ENCODE measurements at regions of chr2 and their contacts with region 1.

Region 1: DNA sequence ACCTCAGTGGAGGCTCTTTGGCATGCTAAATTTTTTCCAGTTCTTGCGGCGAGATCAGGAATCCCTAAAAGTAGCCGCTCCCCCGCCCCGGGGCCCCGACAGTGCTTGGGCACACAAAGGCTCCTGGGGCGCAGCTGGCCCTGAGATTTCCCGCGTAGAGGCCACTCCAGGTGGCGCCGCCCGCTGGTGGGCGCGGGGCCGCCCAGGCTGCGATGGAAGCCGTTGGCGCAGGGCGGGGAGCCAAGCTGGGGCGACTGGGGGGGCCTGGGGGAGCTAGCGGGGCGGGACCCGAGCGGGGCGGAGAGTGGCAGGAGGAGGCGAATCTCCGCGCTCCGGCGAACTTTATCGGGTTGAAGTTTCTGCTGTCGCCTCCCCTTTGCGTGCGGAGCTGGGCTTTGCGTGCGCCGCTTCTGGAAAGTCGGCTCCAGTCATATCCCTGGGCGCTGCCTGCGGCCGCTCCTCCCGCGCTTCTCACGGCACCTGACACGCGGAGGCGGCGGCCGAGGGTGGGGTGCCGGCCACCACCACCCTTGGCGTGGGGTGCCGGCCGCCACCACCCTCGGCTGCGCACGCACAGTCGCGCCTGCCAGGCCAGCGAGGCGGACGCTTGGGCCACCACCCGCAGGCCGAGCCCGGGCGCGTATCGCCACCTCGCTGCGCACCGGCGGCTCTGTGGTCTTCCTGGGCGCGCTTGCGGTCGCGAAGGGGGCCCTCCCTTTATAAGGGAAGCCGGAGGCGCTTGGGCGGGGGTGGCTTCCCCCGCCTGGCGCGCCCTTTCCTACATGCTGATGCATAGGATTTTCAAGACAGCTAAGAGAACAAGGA is 867 bp upstream of the CYP1B1 start:
- DNase-seq: peak; percentile 98
- H3K4me3 ChIP-seq: peak overlapping the region; percentile 68 to 70
- H3K27ac ChIP-seq: peak overlapping the region in 1 of 2 experiments; percentile 88; a peak in 2 of 4 replicates
- H3K4me1 ChIP-seq: peaks cover 0 to 13% of the 10 kb centered on the region in 2 experiments; a peak in 1 of 4 replicates
- H3K27me3 ChIP-seq: no peaks in the 10 kb centered on the region; the same call in 1 of the 2 replicates
- CTCF ChIP-seq: peak; percentile 66
- EP300 ChIP-seq: 0 out of 4 replicates have a peak, but pooled peaks of 1 of the 2 experiments have one; percentile 3
- RAD21 ChIP-seq: no peak

Region 2: GRCh38 chr2:38000485-38001222 is 76.2 kb before region 1 on chr2:
- CTCF ChIA-PET with region 1: interaction called, 24 read pairs
- POLR2A ChIA-PET with region 1: no interaction called
- DNase-seq: no peak
- H3K4me3 ChIP-seq: no peak overlapping the region
- H3K27ac ChIP-seq: no peak overlapping the region
- H3K4me1 ChIP-seq: no peaks in the 10 kb centered on the region
- H3K27me3 ChIP-seq: no peaks in the 10 kb centered on the region
- CTCF ChIP-seq: no peak
- EP300 ChIP-seq: no peak
- RAD21 ChIP-seq: no peak

Region 3: DNA sequence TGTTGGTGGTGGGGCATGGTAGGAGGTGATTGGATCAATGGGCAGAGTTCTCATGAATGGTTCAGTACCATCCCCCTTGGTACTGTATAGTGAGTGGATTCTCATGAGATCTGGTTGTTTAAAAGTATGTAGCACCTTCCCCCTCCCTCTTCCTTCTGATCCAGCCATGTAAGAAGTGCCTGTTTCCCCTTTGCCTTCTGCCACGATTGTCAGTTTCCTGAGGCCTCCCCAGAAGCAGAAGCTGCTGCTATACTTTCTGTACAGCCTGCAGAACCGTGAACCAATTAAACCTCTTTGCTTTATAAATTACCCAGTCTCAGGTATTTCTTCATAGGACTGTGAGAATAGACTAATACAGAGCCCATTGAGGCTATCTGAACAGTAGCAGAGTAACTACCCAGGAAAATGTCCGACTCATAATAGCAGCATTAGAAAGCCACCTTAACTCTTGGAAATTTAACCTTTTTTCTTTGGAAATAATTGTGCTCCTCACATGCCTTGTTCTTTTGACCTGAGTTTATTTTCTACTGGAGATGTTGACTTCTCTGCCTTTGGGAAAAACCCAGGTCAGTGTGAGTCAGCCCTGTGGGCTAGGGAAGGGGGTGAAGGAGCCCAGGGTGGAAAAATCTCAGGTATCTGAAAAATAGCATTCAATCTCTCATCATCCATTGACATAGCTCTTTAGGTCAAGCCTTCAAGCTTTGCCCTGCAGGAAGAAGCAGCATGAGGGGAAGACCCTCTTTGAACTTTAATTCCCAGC is 19.0 kb before region 1 on chr2:
- CTCF ChIA-PET with region 1: interaction called, 44 read pairs
- POLR2A ChIA-PET with region 1: no interaction called
- DNase-seq: no peak
- H3K4me3 ChIP-seq: no peak overlapping the region
- H3K27ac ChIP-seq: no peak overlapping the region
- H3K4me1 ChIP-seq: no peaks in the 10 kb centered on the region
- H3K27me3 ChIP-seq: no peaks in the 10 kb centered on the region; the same call in 1 of the 2 replicates
- CTCF ChIP-seq: no peak
- EP300 ChIP-seq: no peak
- RAD21 ChIP-seq: no peak

Region 4: GRCh38 chr2:38106405-38107094 is 29.7 kb after region 1 on chr2:
- CTCF ChIA-PET with region 1: interaction called, 157 read pairs
- POLR2A ChIA-PET with region 1: interaction called, 32 read pairs
- DNase-seq: no peak
- H3K4me3 ChIP-seq: no peak overlapping the region
- H3K27ac ChIP-seq: peak overlapping the region; percentile 51 to 99
- H3K4me1 ChIP-seq: peaks cover 5 to 51% of the 10 kb centered on the region in 2 experiments; a peak in 3 of 4 replicates
- H3K27me3 ChIP-seq: no peaks in the 10 kb centered on the region
- CTCF ChIP-seq: no peak
- EP300 ChIP-seq: no peak
- RAD21 ChIP-seq: no peak

Region 5: DNA sequence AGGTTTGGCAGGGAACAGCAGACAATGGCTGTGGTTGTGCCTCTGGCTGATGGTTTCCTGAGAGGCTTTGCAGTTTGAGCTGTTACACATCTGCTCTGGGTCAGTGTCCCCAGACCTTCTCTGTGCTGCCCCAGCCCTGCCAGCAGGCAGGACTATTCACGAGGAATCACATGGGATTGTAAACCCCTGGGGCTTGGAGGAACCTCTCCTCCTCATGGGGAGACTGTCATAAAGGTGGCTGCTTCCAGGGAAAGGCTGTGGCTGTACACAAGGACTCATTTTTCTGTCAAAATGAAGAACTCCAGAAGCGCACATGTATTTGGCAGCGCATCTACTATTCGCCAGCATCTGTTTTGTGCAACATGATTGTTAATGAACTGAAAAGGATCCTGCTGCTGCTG is 141.8 kb after region 1 on chr2:
- CTCF ChIA-PET with region 1: interaction called, 41 read pairs
- POLR2A ChIA-PET with region 1: interaction called, 10 read pairs
- DNase-seq: peak; percentile 74
- H3K4me3 ChIP-seq: peak overlapping the region in 1 of 2 experiments; percentile 4; a peak in 1 of 4 replicates
- H3K27ac ChIP-seq: peak overlapping the region in 1 of 2 experiments; percentile 99; a peak in 2 of 4 replicates
- H3K4me1 ChIP-seq: peaks cover 0 to 44% of the 10 kb centered on the region in 2 experiments; a peak in 2 of 4 replicates
- H3K27me3 ChIP-seq: no peaks in the 10 kb centered on the region
- CTCF ChIP-seq: no peak
- EP300 ChIP-seq: peak in 1 of 2 experiments; percentile 97; a peak in 2 of 4 replicates
- RAD21 ChIP-seq: peak; percentile 53

Region 6: DNA sequence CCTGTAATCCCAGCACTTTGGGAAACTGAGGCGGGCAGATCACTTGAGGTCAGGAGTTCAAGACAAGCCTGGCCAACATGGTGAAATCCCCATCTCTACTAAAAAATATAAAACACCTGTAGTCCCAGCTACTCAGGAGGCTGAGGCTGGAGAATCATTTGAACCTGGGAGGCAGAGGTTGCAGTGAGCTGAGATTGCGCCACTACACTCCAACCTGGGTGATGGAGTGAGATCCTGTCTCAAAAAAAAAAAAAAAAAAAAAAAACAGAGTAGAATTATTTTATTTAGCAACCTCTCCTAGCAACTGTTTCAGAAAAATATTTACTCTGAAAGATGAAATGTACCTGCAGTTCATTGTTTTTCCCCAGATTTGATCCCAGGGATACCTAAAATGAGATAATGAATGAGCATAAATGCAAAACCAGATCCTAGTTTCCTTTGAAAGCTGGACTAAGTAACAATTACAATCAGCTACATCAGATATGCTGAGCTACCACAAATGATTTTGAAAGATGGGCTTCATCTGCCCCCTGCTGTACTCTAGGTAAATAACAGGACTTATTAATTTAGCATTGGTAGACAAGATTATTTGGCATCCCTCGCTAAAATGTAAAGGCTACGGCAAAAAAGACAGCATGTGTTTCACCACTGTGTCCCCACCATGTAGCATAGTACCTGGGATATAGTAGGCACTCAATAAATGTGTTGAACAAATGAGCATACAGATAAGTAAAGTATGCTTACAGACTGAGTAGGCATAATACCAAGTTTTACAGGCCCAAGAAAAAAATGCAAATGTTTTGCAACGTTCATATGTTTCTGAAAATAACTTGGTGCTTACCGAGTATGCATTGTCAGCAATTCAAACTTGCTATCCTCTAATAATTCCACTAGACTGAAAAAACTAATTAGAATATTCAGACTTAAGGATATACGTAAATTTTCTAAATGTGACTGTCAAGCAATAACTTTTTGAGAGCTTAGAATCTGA is 197.8 kb after region 1 on chr2:
- CTCF ChIA-PET with region 1: interaction called, 94 read pairs
- POLR2A ChIA-PET with region 1: interaction called, 19 read pairs
- DNase-seq: peak; percentile 81
- H3K4me3 ChIP-seq: no peak overlapping the region
- H3K27ac ChIP-seq: 0 out of 4 replicates have a peak overlapping the region, but pooled peaks of 1 of the 2 experiments have one; percentile 18
- H3K4me1 ChIP-seq: no peaks in the 10 kb centered on the region; a peak in 1 of 4 replicates
- H3K27me3 ChIP-seq: no peaks in the 10 kb centered on the region
- CTCF ChIP-seq: peak; percentile 86
- EP300 ChIP-seq: peak in 1 of 2 experiments; percentile 50; a peak in 1 of 4 replicates
- RAD21 ChIP-seq: peak; percentile 100